ENCODE measurements at regions of chr18 and their contacts with region 1.

Region 1: DNA sequence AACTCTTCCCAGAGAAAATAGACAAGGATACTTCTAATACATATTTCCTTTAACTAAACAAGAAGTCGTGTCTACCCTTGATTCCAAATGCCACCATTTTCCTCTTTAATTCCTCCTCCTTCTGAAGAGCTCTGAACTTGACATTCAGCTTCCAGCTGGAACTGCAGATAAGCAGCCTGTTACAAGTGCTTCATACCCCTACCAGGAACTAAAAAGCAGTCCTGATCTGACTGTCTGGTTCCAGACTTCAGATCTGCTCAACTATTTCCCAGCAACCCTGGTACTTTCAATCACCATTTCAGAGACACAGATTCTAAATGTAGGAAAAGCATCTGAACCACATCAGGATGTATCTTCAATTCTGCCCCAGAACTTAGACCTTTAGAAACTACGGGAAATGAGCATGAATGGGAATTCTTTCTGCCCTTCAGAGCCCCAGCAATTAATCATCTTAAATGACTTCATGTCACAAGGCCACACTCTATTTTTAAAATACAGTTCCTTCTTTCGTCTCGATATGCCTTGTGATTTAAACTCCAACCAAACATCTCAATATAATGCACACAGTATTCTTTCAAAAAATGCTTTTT is 159.5 kb downstream of the L3MBTL4 start:
- DNase-seq: peak in 1 of 7 donors; percentile 25
- H3K4me3 ChIP-seq: peak overlapping the region in 1 of 4 donors; percentile 2
- H3K27ac ChIP-seq: peak overlapping the region in 4 of 5 donors; percentile 27 to 82 (median 72)
- H3K4me1 ChIP-seq: peaks cover 31 to 39% of the 10 kb centered on the region in 2 donors
- H3K27me3 ChIP-seq: no peaks in the 10 kb centered on the region
- CTCF ChIP-seq: no peak
- POLR2A ChIP-seq: peak in 1 of 2 donors; percentile 29

Region 2: DNA sequence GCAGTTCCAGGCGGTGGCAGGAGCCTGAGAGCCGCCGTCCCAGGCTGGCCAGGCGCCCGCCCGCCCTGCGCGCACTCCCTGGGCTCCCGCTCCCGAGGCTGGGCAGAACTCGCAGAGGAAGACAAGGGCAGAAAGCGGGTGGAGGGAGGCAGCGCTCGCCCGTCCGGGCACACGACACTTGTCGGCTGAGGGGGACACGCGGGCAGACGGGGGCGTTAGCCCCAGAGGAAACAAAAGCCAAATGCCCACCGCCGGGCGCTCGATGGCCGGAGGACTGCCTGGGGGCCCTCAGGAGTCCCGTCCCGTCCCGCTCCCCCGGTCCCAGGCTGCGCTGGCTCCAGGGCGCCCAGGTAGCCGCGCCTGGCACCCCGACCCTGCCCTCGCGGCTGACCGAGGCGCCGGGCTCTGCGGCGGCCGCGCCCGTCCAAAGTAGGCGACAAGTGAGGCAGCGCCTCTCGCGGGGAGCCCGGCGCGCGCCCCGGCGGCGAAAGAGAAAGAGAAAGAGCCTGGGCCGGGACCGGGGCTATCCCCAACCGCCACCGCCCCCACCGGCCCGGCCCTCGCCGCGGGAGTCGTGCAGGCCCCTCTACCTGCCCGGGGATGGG is 159.0 kb after region 1 on chr18:
- intact Hi-C with region 1: loop called in 1 of 2 experiments (anchors 10 kb)
- DNase-seq: peak; percentile 74 to 85 (median 80)
- H3K4me3 ChIP-seq: peak overlapping the region; percentile 2 to 98 (median 76)
- H3K27ac ChIP-seq: peak overlapping the region; percentile 60 to 99 (median 93)
- H3K4me1 ChIP-seq: peaks cover 0 to 4% of the 10 kb centered on the region in 2 donors
- H3K27me3 ChIP-seq: no peaks in the 10 kb centered on the region
- CTCF ChIP-seq: peak in 2 of 6 experiments; percentile 13 to 15
- POLR2A ChIP-seq: peak in 1 of 2 donors; percentile 42

Region 3: DNA sequence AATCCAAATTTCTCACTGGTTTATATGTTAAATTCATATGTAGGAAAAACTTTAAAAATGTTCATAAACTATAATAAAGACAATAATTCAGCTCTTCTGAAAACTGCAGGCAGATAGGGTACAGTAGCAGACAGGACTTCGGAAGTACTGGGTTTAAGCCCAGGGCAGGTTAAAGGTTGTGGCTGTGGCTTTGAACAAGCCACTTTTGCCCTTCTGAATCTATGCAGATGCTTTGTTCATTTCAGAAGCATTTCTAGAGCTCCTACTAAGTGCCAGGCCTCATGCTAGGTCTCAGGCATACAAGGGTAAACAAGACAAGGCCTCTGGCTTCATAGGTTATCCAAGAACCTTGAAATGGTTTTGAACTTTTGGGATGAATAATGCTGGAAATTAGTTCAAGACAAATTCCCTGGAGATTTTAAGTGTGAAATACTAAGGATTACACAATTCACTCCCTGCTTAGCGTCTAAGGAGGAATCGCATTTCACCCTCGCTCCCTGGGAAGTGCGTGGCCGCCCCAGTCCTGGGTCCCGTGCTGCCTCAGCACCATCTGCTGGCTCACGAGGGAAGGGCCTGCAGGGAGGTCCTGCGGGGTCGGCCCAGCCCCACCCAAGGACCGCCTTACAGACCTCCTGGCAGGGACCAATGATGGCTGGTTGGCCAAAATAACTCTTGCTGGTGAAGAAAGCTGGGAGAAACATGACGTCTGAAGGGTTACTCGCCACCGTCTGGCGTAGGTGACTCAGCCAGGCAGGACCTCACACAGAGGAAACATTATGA is 227.2 kb after region 1 on chr18:
- intact Hi-C with region 1: loop called in 1 of 2 experiments (anchors 10 kb)
- DNase-seq: peak; percentile 63 to 85 (median 79)
- H3K4me3 ChIP-seq: no peak overlapping the region
- H3K27ac ChIP-seq: no peak overlapping the region
- H3K4me1 ChIP-seq: no peaks in the 10 kb centered on the region
- H3K27me3 ChIP-seq: no peaks in the 10 kb centered on the region
- CTCF ChIP-seq: peak; percentile 60 to 93 (median 86)
- POLR2A ChIP-seq: no peak

Region 4: GRCh38 chr18:6682437-6683111 is 427.4 kb after region 1 on chr18:
- intact Hi-C with region 1: no loop called
- DNase-seq: no peak
- H3K4me3 ChIP-seq: no peak overlapping the region
- H3K27ac ChIP-seq: no peak overlapping the region
- H3K4me1 ChIP-seq: no peaks in the 10 kb centered on the region
- H3K27me3 ChIP-seq: no peaks in the 10 kb centered on the region
- CTCF ChIP-seq: no peak
- POLR2A ChIP-seq: no peak